ENCODE measurements at regions of chr2 and their contacts with region 1.

Region 1: DNA sequence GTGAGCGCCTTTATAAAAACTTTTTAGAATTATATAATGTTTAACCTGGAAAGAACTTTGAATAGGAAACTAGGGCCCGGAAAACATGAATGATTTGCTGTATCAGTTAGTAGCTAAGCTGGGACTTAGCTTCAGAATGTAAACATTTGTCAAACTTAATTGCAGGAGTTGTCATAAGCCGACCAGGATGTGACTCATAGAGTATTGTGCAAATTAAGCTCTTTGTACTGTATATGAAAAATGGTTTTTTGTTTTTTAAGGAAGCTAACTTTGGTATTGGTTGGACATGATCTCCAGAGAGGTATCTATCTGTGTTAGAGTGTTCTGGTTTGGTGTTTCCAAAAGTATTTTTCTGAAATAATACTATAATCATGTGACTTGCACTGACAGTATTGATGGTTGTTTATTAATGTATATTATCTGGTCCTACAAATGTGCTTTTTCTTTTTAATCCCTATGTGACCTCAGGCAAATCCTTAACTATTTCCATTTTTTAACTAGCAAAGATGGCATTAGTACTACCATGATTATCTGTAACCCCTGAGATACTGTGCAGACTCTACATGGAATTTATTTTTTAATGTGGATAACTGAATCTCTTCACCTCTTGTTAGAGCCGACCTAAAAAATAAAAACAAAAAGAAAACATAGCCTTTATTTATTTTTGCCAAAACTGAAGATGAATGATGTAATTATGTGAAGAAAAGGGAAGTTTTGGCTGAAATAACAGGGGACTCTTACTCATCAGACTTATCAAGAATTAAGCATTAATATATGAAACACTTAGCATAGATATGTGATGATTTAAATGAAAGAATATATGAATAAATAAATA is 11.7 kb downstream of the YIPF4 start:
- DNase-seq: peak; percentile 78
- H3K4me3 ChIP-seq: no peak overlapping the region
- H3K27ac ChIP-seq: peak overlapping the region; percentile 49
- H3K4me1 ChIP-seq: peaks cover 22% of the 10 kb centered on the region
- H3K27me3 ChIP-seq: no peaks in the 10 kb centered on the region
- CTCF ChIP-seq: no peak

Region 2: DNA sequence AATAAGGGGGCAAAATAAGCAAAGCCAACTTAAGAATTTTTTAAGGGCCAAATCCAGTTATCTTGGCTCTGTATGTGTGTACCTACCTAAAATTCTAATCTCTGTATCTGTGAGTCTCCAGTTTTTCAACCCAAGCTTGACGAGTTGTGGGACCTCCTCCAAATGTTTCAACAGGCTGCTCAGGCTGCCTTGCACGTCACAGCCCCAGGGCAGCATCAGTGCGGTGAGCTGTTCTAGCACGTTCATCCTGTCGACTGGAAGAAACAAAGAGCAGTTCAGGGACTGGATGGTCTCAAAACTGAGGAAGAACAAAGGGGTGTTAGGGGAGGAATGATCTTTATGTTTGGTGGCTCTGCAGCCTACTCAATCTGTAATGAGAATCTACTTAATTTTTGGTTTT is 54.1 kb before region 1 on chr2:
- CTCF ChIA-PET with region 1: no interaction called
- dilution Hi-C with region 1: loop called (anchors 5 kb)
- in situ Hi-C with region 1: no loop called
- intact Hi-C with region 1: no loop called
- DNase-seq: peak; percentile 86
- H3K4me3 ChIP-seq: peak overlapping the region in 1 of 3 experiments; percentile 10
- H3K27ac ChIP-seq: peak overlapping the region; percentile 66
- H3K4me1 ChIP-seq: peaks cover 21% of the 10 kb centered on the region
- H3K27me3 ChIP-seq: no peaks in the 10 kb centered on the region
- CTCF ChIP-seq: no peak